Breast epithelium (tissue), 4 donors: ENCODE measurements at regions of chr6 and their contacts with region 1.

Region 1: GRCh38 chr6:6474170-6474920 is 114.2 kb upstream of the LY86 start:
- DNase-seq: no peak
- H3K4me3 ChIP-seq: no peak overlapping the region
- H3K27ac ChIP-seq: no peak overlapping the region
- H3K4me1 ChIP-seq: no peaks in the 10 kb centered on the region
- H3K27me3 ChIP-seq: no peaks in the 10 kb centered on the region
- CTCF ChIP-seq: no peak
- POLR2A ChIP-seq: no peak

Region 2: DNA sequence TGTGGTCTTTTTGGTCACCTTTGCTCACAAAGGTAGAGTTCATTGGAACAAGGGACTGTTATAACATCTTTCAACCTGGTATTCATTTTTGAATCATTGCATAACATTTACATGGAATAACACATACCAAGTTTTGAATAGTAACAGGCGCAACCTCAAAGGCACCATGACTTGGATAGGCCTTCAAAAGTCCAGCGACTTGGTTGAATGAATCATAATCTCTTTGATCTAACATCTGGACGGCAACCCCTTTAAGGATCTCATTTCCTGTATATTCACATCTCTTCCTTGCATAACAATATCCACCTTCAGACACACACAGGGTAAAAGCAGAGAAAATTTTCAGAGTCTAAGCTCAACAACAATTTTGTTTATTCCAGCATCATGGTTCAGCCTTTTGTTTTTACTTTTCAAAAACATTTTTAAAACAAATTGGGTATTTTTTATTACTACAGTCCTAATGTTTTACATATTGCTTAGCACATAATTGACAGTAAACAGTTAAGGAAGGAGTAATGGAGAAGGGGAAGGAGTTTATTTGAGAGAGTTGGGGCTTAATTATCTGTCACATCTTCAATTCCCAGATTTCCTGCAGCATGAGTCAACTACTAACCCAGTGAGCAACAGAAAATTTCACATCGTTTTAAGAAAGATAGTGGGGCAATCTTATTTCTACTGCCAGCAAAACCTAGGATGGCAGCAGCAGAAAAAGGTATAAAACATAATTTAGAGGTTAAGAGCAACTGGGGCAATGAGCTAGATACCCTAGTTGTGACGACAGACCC is 112.1 kb before region 1 on chr6:
- intact Hi-C with region 1: no loop called
- DNase-seq: no peak
- H3K4me3 ChIP-seq: no peak overlapping the region
- H3K27ac ChIP-seq: peak overlapping the region in 1 of 2 donors; percentile 43
- H3K4me1 ChIP-seq: no peaks in the 10 kb centered on the region
- H3K27me3 ChIP-seq: peaks cover 0 to under 1% of the 10 kb centered on the region in 2 donors
- CTCF ChIP-seq: no peak
- POLR2A ChIP-seq: no peak

Region 3: DNA sequence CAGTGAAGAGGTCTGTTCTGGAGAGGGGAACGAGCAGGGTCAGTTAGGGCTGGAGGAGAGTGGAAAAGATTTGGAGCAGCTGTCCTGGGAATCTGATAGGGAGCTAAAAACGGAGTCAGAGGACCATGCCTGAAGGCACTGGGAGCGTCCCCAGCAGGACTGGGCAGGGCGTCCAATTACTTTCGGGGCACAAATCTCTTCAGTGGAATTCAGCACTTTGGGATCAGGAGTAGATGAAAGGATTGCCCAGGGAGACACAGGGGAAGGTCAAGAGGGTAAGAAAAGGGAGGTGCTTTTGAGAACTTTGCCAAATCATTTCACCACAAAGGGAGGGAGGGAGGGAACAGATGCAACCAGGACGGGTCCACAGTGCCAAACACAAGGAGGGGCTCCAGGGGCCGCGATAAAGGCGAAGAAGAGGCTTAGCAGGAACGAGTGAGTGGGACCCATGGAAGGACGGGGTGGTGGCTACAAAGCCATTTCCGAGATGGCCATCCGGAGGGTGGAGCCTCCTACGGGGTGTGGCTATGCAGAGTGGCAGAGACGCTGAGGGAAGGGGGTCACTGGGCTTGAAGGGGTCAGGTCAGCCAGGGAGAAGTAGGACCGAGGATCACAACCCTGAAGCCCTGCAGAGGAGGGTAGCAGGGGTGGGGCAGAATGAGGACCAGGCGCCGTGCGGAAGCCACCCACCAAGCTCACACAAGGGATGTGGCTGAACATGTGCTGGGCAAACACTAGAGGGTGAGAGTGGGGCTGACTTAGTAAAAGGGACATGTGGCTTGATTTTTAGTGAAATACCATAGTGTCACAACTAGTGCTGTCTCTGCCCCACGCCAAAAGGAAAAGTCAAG is 453.4 kb after region 1 on chr6:
- intact Hi-C with region 1: loop called (anchors 5 kb)
- DNase-seq: no peak
- H3K4me3 ChIP-seq: peak overlapping the region; percentile 4 to 55 (median 21)
- H3K27ac ChIP-seq: peak overlapping the region in 1 of 2 donors; percentile 25
- H3K4me1 ChIP-seq: no peaks in the 10 kb centered on the region
- H3K27me3 ChIP-seq: no peaks in the 10 kb centered on the region
- CTCF ChIP-seq: no peak
- POLR2A ChIP-seq: no peak